A549 (cell line): ENCODE measurements at regions of chr11 and their contacts with region 1.

Region 1: DNA sequence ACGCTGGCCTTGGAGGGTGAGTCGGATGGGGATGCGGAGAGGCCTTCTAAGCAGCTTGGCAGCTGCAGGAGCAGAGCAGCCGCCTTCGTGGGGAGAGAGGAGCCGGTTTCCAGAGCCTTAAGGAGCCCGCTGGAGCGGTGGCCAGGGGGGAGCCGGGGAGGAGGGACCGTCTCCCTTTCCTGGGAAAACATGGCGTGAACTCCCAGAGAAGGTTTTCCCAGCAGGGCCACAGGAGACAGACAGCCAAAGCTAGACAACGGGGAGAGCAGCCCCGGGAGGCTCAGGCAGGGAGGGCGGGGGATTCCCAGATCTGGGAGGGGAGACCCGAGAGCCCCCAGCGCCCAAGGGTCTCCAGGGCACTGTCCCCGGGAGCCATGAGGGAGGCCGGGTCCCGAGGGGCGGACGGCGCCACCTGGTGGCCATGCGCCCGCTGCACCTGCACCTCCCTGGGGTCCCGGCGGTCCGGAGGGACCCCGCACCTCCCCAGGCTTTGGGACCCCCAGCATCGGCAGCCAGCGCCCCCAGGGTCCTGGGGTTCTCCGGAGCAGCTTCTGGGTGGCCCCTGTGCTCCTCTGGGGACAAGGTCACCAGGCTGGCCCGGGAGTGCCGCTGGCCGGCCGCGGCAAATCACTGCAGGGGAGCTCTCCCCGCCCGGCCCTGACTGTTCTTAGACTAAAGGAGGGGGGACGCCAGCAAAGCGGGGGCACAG is 2.4 kb upstream of the SYT8 start:
- DNase-seq: peak; percentile 44 to 69
- ATAC-seq: peak; percentile 41 to 83; a peak in 3 of 6 replicates
- H3K4me3 ChIP-seq: peak overlapping the region; percentile 27
- H3K27ac ChIP-seq: peak overlapping the region; percentile 73 to 89
- H3K4me1 ChIP-seq: peaks cover 66% of the 10 kb centered on the region
- CTCF ChIP-seq: peak; percentile 99
- EP300 ChIP-seq: no peak
- POLR2A ChIP-seq: no peak
- RAD21 ChIP-seq: peak; percentile 80 to 99

Region 2: GRCh38 chr11:1628506-1629325 is 203.6 kb before region 1 on chr11:
- CTCF ChIA-PET with region 1: interaction called, 10 read pairs
- POLR2A ChIA-PET with region 1: no interaction called
- DNase-seq: peak; percentile 44 to 83
- ATAC-seq: peak; percentile 84 to 97
- H3K4me3 ChIP-seq: no peak overlapping the region
- H3K27ac ChIP-seq: no peak overlapping the region
- H3K4me1 ChIP-seq: no peaks in the 10 kb centered on the region
- CTCF ChIP-seq: peak; percentile 82
- EP300 ChIP-seq: no peak
- POLR2A ChIP-seq: no peak
- RAD21 ChIP-seq: peak; percentile 52 to 68

Region 3: GRCh38 chr11:1706634-1707400 is 125.5 kb before region 1 on chr11:
- CTCF ChIA-PET with region 1: interaction called, 93 read pairs
- POLR2A ChIA-PET with region 1: interaction called, 3 read pairs
- DNase-seq: peak; percentile 38 to 67
- ATAC-seq: peak; percentile 77 to 97
- H3K4me3 ChIP-seq: no peak overlapping the region
- H3K27ac ChIP-seq: no peak overlapping the region
- H3K4me1 ChIP-seq: peaks cover 3% of the 10 kb centered on the region; the same call in 1 of the 3 replicates
- CTCF ChIP-seq: peak; percentile 51
- EP300 ChIP-seq: no peak
- POLR2A ChIP-seq: no peak
- RAD21 ChIP-seq: peak; percentile 74 to 82

Region 4: DNA sequence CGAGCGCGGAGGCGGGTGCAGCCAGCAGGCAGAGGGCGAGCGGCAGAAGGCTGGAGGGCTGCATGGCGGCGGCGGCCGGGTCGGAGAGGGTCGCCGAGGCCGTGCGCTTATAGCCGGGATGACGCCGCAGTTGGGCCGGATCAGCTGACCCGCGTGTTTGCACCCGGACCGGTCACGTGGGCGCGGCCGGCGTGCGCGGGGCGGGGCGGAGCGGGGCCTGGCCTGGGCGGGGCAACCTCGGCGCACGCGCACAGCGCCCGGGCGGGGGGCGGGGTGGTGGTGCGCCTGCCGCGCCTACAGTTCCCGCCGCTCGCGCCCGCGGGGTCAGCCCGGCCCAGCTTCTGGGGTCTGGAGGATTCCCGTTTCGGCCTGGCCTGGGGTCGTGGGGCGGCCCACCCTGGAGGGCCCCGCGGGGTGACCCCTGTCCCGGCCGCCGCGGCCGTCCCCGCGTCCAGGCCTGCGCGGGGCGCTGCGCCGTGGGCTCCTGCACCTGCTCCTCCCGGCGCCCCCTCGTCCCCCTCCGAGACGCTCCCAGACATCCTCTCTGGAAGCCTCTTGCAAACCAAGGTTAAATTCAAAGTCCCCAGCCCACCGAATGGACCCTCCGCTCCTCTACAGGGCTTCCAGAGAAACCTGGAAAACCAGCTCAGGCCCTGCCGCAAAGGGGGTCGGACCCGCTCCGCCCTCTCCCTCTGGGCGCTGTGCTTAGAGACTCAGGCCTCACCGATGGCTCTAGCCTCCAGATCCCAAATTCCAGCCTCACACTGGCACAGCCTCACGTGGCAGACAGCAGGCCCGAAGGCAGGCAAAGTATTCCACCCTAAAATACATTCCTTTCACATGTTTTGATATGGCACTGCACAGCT is 68.3 kb before region 1 on chr11 and contains the start of gene CTSD:
- CTCF ChIA-PET with region 1: interaction called, 14 read pairs
- POLR2A ChIA-PET with region 1: interaction called, 8 read pairs
- DNase-seq: peak; percentile 84 to 91
- ATAC-seq: peak; percentile 69 to 70
- H3K4me3 ChIP-seq: peak within 1 kb of the TSS; percentile 100
- H3K27ac ChIP-seq: peak within 1 kb of the TSS; percentile 96 to 97
- H3K4me1 ChIP-seq: peaks cover 37% of the 10 kb centered on the region
- CTCF ChIP-seq: 0 out of 3 replicates have a peak, but pooled peaks have one; percentile 20
- EP300 ChIP-seq: no peak
- POLR2A ChIP-seq: peak; percentile 35
- RAD21 ChIP-seq: peak in 1 of 2 experiments; percentile 12; a peak in 1 of 5 replicates
- polyA plus RNA-seq, gene CTSD: 74.0 and 117 TPM in 2 replicates

Region 5: GRCh38 chr11:1807264-1807995 is 24.9 kb before region 1 on chr11:
- CTCF ChIA-PET with region 1: interaction called, 75 read pairs
- POLR2A ChIA-PET with region 1: no interaction called
- DNase-seq: peak; percentile 32 to 59
- ATAC-seq: peak; percentile 81 to 92; a peak in 5 of 6 replicates
- H3K4me3 ChIP-seq: no peak overlapping the region
- H3K27ac ChIP-seq: no peak overlapping the region
- H3K4me1 ChIP-seq: no peaks in the 10 kb centered on the region
- CTCF ChIP-seq: peak; percentile 14; the same call in 1 of the 3 replicates
- EP300 ChIP-seq: no peak
- POLR2A ChIP-seq: no peak
- RAD21 ChIP-seq: peak; percentile 25 to 44; a peak in 3 of 5 replicates

Region 6: GRCh38 chr11:1882519-1883238 is 50.3 kb after region 1 on chr11:
- CTCF ChIA-PET with region 1: interaction called, 36 read pairs
- POLR2A ChIA-PET with region 1: no interaction called
- DNase-seq: peak; percentile 73 to 89
- ATAC-seq: peak; percentile 85 to 97
- H3K4me3 ChIP-seq: no peak overlapping the region
- H3K27ac ChIP-seq: no peak overlapping the region; a peak in 1 of 6 replicates
- H3K4me1 ChIP-seq: no peaks in the 10 kb centered on the region
- CTCF ChIP-seq: peak; percentile 81
- EP300 ChIP-seq: no peak
- POLR2A ChIP-seq: no peak
- RAD21 ChIP-seq: peak; percentile 87 to 89

Region 7: GRCh38 chr11:1970956-1971355 is 138.6 kb after region 1 on chr11:
- CTCF ChIA-PET with region 1: interaction called, 12 read pairs
- POLR2A ChIA-PET with region 1: no interaction called
- DNase-seq: peak in 1 of 2 experiments; percentile 0
- ATAC-seq: no peak
- H3K4me3 ChIP-seq: no peak overlapping the region
- H3K27ac ChIP-seq: no peak overlapping the region
- H3K4me1 ChIP-seq: no peaks in the 10 kb centered on the region
- CTCF ChIP-seq: no peak
- EP300 ChIP-seq: no peak
- POLR2A ChIP-seq: no peak
- RAD21 ChIP-seq: no peak

Region 8: GRCh38 chr11:2222451-2222850 is 390.1 kb after region 1 on chr11:
- CTCF ChIA-PET with region 1: no interaction called
- POLR2A ChIA-PET with region 1: no interaction called
- DNase-seq: no peak
- ATAC-seq: no peak
- H3K4me3 ChIP-seq: no peak overlapping the region
- H3K27ac ChIP-seq: no peak overlapping the region
- H3K4me1 ChIP-seq: no peaks in the 10 kb centered on the region
- CTCF ChIP-seq: no peak
- EP300 ChIP-seq: no peak
- POLR2A ChIP-seq: no peak
- RAD21 ChIP-seq: no peak